Body of pancreas (tissue), 4 donors: ENCODE measurements at regions of chr16 and their contacts with region 1.

Region 1: DNA sequence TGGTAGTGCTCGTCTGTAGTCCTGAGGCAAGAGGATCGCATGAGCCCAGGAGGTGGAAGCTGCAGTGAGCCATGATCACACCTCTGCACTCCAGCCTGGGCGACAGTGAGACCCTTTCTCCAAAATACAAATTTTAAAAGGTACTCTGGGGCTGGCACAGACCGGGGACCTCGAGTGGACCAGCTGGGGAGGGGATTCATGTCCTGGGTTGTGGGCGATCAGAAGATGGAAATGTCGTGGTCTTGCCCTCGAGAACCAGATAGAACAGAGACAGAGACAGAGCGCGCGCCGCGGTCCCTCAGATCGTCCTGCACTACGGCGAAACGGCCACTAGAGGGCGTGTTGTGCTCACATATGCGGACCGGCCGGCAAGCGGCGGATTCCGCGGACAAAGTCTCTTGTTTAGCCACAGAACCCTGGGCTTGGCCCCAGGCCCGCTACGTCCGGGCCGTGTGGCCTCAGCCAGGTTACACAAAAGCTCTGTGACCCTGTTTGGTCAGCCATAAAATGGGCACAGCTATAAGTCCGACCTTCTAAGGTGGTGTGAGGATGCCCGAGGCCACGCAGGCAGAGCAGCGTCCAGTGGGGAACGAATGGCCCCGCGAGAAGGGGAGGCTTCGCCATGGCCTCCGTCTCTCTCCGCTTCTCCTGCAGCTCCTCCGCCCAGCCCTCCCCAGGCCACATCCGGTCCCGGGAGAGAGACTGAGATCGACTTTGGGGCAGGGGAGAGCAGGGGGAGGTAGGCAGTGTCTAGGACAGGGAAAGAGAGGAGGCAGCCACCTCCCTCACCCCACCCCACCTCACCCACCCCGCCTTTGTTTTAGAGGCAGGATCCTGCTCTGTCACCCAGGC is 14.6 kb upstream of the SBK1 start:
- DNase-seq: peak; percentile 85 to 91 (median 86)
- ATAC-seq: peak; percentile 91
- H3K4me3 ChIP-seq: no peak overlapping the region
- H3K27ac ChIP-seq: no peak overlapping the region
- H3K4me1 ChIP-seq: peaks cover 8% of the 10 kb centered on the region
- H3K27me3 ChIP-seq: peaks cover 0 to 3% of the 10 kb centered on the region in 2 donors
- CTCF ChIP-seq: peak; percentile 93 to 97 (median 95)
- POLR2A ChIP-seq: no peak

Region 2: GRCh38 chr16:28052274-28053128 is 225.3 kb before region 1 on chr16:
- intact Hi-C with region 1: no loop called
- DNase-seq: no peak
- ATAC-seq: no peak
- H3K4me3 ChIP-seq: no peak overlapping the region
- H3K27ac ChIP-seq: no peak overlapping the region
- H3K4me1 ChIP-seq: no peaks in the 10 kb centered on the region
- H3K27me3 ChIP-seq: no peaks in the 10 kb centered on the region
- CTCF ChIP-seq: no peak
- POLR2A ChIP-seq: no peak

Region 3: DNA sequence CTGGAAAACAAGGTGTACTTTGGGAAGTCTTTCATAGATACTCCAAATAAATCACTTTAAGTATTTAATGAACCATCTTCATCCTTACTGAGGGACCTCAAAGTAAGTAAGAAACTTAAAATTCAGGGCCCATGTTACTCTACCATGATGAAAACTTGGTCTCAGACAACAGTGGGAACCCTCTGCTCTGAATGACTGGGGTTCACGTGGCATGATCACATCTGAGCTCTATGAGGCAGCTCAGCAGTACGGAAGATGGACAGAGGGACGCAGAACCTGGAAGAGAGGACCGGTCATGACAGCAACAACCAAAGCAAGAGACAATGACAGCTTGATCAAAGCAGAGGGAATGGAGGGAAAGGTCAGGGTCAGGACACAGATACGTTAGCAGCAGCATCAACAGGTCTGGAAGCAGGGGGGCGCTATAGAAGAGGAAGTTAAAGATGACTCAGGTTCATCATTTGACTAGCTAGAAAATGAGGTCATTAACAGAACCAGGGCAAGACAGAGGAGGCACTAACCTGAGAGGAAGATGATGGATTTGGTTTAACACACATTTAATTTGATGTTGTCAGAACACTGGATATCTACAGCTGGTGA is 75.5 kb before region 1 on chr16:
- intact Hi-C with region 1: no loop called
- DNase-seq: no peak
- ATAC-seq: no peak
- H3K4me3 ChIP-seq: no peak overlapping the region
- H3K27ac ChIP-seq: no peak overlapping the region
- H3K4me1 ChIP-seq: peaks cover 4% of the 10 kb centered on the region
- H3K27me3 ChIP-seq: no peaks in the 10 kb centered on the region
- CTCF ChIP-seq: no peak
- POLR2A ChIP-seq: no peak

Region 4: GRCh38 chr16:28237754-28238357 is 39.9 kb before region 1 on chr16:
- intact Hi-C with region 1: no loop called
- DNase-seq: no peak
- ATAC-seq: no peak
- H3K4me3 ChIP-seq: no peak overlapping the region
- H3K27ac ChIP-seq: no peak overlapping the region
- H3K4me1 ChIP-seq: no peaks in the 10 kb centered on the region
- H3K27me3 ChIP-seq: no peaks in the 10 kb centered on the region
- CTCF ChIP-seq: no peak
- POLR2A ChIP-seq: no peak

Region 5: DNA sequence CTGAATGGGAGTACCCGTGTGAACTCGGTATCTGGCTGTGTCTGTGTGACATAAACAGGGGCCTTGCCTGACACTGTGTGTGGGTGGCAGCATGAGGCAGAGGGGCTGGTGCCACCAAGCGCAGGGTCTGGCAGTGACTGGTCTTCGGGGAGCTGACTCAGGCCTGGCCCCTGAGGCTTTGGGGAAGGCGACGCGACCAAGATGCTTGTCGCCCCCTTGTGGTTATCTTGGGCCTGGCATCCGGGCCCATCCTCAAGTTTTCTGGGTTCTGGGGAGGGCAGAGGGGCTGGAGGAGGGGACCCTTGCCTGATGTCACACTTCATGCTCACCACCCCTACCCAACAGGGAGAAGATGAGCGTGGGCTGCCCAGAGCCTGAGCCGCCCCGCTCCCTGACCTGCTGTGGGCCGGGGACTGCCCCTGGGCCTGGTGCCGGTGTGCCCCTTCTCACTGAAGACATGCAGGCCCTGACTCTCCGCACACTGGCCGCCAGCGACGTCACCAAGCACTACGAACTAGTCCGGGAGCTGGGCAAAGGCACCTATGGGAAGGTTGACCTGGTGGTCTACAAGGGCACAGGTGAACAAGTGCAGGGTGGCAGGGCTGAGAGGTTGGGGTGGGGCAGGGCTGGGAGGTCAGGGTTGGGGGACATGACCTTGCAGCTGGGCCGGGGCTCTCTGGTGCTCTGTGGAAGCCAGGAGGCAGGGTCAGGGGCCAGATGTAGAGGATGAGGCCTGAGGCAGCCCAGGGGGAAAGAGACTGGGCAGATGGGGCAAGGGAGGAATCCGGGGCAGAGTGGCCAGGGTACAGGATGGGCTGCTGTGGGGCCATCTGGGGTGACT is 39.5 kb after region 1 on chr16:
- intact Hi-C with region 1: loop called (anchors 5 kb)
- DNase-seq: peak; percentile 54 to 70 (median 64)
- ATAC-seq: peak; percentile 62
- H3K4me3 ChIP-seq: no peak overlapping the region
- H3K27ac ChIP-seq: no peak overlapping the region
- H3K4me1 ChIP-seq: peaks cover 3% of the 10 kb centered on the region
- H3K27me3 ChIP-seq: no peaks in the 10 kb centered on the region
- CTCF ChIP-seq: peak; percentile 68 to 92 (median 76)
- POLR2A ChIP-seq: no peak